CD8-positive, alpha-beta T cell (primary cell): ENCODE measurements at regions of chr15 and their contacts with region 1.

Region 1: GRCh38 chr15:65400760-65401610 is 21.8 kb downstream of the IGDCC4 start:
- DNase-seq: peak in 7 of 9 experiments; percentile 28 to 59 (median 46)
- ATAC-seq: peak; percentile 59
- H3K4me3 ChIP-seq: no peak overlapping the region
- H3K4me3 Mint-ChIP-seq: no peak overlapping the region
- H3K27ac ChIP-seq: no peak overlapping the region
- H3K27ac Mint-ChIP-seq: no peak overlapping the region
- H3K4me1 ChIP-seq: peaks cover 5% of the 10 kb centered on the region
- H3K4me1 Mint-ChIP-seq: peaks cover 8% of the 10 kb centered on the region
- H3K27me3 ChIP-seq: peaks cover 13 to 16% of the 10 kb centered on the region in 2 experiments
- H3K27me3 Mint-ChIP-seq: peaks cover 50% of the 10 kb centered on the region
- CTCF ChIP-seq: peak; percentile 44

Region 2: GRCh38 chr15:65318870-65319356 is 82.1 kb before region 1 on chr15:
- CTCF ChIA-PET with region 1: interaction called, 6 read pairs
- POLR2A ChIA-PET with region 1: no interaction called
- intact Hi-C with region 1: loop called in 1 of 2 experiments (anchors 1 kb)
- DNase-seq: peak; percentile 60 to 83 (median 75)
- ATAC-seq: peak; percentile 100
- H3K4me3 ChIP-seq: no peak overlapping the region
- H3K4me3 Mint-ChIP-seq: no peak overlapping the region
- H3K27ac ChIP-seq: no peak overlapping the region
- H3K27ac Mint-ChIP-seq: no peak overlapping the region
- H3K4me1 ChIP-seq: no peaks in the 10 kb centered on the region
- H3K4me1 Mint-ChIP-seq: peaks cover 2% of the 10 kb centered on the region
- H3K27me3 ChIP-seq: no peaks in the 10 kb centered on the region
- H3K27me3 Mint-ChIP-seq: peaks cover 4% of the 10 kb centered on the region
- CTCF ChIP-seq: peak; percentile 86